ENCODE measurements at regions of chr13 and their contacts with region 1.

Region 1: DNA sequence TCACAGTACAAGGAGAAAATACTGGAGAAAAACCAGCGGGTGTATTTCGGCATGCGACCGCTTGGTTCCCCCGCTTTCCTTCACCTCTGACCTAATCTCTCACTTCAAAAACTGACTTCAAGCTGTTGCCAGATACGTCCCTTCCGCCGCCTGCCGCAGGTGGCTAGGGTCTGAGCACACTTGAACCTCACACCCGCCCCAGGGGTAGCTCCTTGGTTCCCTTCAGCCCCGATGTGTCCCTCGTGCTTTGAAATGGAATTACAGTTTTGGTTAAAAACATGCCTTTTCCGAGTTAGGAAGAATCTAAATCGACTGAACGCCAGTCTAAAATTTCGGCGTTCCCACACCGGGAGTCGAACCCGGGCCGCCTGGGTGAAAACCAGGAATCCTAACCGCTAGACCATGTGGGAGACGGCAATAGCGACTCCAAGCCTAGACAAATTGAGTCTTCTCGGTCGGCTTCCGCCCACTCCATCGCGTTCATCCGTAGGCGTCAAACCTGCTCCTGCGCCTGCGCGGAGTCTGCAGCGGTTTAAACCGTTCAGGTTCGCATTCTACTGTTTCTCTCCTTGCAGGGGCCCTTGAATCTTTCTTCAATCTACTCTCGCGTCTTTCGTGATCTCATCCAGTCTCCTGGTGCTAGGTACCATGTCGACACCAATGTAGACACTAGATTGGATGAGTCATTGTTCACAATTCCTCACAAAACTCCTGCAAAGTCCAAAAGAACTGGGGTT is 71.5 kb downstream of the NUFIP1 start:
- DNase-seq: peak; percentile 96
- H3K4me3 Mint-ChIP-seq: no peak overlapping the region
- H3K27ac Mint-ChIP-seq: no peak overlapping the region
- H3K4me1 Mint-ChIP-seq: peaks cover 18% of the 10 kb centered on the region
- H3K27me3 Mint-ChIP-seq: no peaks in the 10 kb centered on the region
- CTCF ChIP-seq: peak; percentile 54

Region 2: GRCh38 chr13:44734201-44734707 is 183.5 kb before region 1 on chr13:
- CTCF ChIA-PET with region 1: no interaction called
- POLR2A ChIA-PET with region 1: interaction called, 3 read pairs
- intact Hi-C with region 1: loop called (anchors 5 kb)
- DNase-seq: peak; percentile 93
- H3K4me3 Mint-ChIP-seq: peak overlapping the region; percentile 14
- H3K27ac Mint-ChIP-seq: peak overlapping the region; percentile 78
- H3K4me1 Mint-ChIP-seq: peaks cover 20% of the 10 kb centered on the region
- H3K27me3 Mint-ChIP-seq: no peaks in the 10 kb centered on the region
- CTCF ChIP-seq: no peak

Region 3: DNA sequence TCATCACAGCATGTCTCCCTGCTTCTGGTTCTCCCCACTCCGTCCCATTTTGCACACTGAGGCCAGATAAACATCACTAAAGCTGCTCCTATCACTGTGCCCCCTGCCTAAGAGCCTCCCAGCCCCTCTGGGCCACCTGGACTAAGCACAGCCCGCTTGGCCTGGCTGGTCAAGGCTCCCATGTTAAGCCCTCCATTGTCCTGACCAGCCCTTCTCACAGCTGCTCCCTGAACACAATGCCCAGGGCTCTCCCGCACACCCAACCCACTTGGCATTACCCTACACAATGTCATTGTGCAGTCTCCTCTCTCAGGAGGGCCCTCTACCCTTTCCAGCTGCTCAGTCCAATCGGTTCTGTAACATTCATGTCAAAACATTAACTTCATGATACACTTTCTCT is 61.9 kb before region 1 on chr13:
- CTCF ChIA-PET with region 1: no interaction called
- POLR2A ChIA-PET with region 1: no interaction called
- intact Hi-C with region 1: no loop called
- DNase-seq: no peak
- H3K4me3 Mint-ChIP-seq: no peak overlapping the region
- H3K27ac Mint-ChIP-seq: no peak overlapping the region
- H3K4me1 Mint-ChIP-seq: peaks cover 8% of the 10 kb centered on the region
- H3K27me3 Mint-ChIP-seq: no peaks in the 10 kb centered on the region
- CTCF ChIP-seq: no peak

Region 4: DNA sequence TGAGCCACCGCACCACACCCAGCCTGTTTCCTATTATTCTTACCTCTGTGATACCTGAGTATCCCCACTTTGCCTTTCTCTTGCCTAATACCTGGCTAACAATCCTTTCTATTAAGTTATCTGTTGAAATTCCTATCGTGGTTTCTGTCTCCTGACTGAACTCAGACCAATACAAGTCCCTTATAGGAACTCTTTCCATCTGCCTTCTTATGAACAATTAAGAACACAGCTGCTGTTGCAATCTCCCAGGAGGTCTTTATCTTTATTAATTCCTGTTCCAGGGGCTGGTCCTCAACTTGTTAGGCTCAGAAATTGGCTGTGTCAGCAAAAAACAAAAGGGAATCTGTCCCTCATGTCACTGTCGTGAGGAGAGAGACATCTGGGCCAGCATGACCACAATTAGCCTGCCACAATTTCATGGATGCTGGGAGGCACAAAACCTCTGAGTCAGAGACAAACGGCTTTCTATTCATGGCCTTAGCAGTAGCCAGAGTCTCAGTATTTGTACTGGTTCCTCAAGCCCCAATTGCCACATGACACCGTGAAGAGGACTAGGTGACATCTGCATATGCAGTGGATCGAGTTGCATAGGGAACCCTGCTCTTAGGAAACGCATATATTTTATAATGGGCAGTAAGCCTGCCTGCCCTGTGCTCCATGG is 13.3 kb after region 1 on chr13:
- CTCF ChIA-PET with region 1: interaction called, 13 read pairs
- POLR2A ChIA-PET with region 1: interaction called, 25 read pairs
- intact Hi-C with region 1: no loop called
- DNase-seq: no peak
- H3K4me3 Mint-ChIP-seq: no peak overlapping the region
- H3K27ac Mint-ChIP-seq: peak overlapping the region; percentile 11
- H3K4me1 Mint-ChIP-seq: peaks cover 30% of the 10 kb centered on the region
- H3K27me3 Mint-ChIP-seq: no peaks in the 10 kb centered on the region
- CTCF ChIP-seq: no peak

Region 5: GRCh38 chr13:44969551-44970484 is 52.1 kb after region 1 on chr13:
- CTCF ChIA-PET with region 1: interaction called, 19 read pairs
- POLR2A ChIA-PET with region 1: interaction called, 10 read pairs
- intact Hi-C with region 1: loop called (anchors 1 kb)
- DNase-seq: peak; percentile 66
- H3K4me3 Mint-ChIP-seq: no peak overlapping the region
- H3K27ac Mint-ChIP-seq: no peak overlapping the region
- H3K4me1 Mint-ChIP-seq: peaks cover 15% of the 10 kb centered on the region
- H3K27me3 Mint-ChIP-seq: no peaks in the 10 kb centered on the region
- CTCF ChIP-seq: peak; percentile 70